ENCODE measurements at regions of chr22 and their contacts with region 1.

Region 1: DNA sequence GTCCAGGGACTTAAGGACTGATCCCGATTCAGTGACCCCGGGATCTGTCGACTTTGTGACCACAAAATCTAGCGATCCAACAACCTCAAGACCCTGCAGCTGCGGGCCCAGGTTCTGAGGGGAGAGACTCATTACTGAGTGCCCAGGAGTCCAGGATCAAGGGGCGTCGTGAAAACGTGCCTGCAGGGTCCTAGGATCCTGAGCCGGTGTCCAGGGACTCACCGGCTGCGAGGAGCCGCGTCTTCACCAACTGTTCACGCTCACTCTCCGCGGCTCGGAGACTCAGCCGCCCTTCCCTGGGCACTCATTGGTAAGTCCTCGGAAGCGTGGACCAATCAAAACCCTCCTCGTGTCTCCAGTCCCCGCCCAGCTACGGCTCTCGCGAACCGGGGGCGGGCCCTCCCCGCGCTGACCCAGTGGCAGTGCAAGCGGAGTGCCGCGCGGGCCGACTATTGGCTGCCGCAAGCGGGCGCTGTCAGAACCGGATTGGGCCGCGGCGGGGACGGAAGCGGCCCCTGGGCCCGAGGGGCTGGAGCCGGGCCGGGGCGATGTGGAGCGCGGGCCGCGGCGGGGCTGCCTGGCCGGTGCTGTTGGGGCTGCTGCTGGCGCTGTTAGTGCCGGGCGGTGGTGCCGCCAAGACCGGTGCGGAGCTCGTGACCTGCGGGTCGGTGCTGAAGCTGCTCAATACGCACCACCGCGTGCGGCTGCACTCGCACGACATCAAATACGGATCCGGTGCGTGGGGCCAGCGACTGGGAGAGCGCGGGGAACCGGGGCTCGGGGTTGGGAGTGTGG is at the start of gene SDF2L1:
- DNase-seq: peak; percentile 98
- CTCF ChIP-seq: peak; percentile 28

Region 2: GRCh38 chr22:21573750-21574494 is 68.1 kb before region 1 on chr22:
- CTCF ChIA-PET with region 1: interaction called, 12 read pairs
- POLR2A ChIA-PET with region 1: interaction called, 3 read pairs
- DNase-seq: no peak
- CTCF ChIP-seq: no peak

Region 3: GRCh38 chr22:21612865-21613265 is 29.1 kb before region 1 on chr22:
- CTCF ChIA-PET with region 1: interaction called, 19 read pairs
- POLR2A ChIA-PET with region 1: no interaction called
- DNase-seq: no peak
- CTCF ChIP-seq: no peak

Region 4: DNA sequence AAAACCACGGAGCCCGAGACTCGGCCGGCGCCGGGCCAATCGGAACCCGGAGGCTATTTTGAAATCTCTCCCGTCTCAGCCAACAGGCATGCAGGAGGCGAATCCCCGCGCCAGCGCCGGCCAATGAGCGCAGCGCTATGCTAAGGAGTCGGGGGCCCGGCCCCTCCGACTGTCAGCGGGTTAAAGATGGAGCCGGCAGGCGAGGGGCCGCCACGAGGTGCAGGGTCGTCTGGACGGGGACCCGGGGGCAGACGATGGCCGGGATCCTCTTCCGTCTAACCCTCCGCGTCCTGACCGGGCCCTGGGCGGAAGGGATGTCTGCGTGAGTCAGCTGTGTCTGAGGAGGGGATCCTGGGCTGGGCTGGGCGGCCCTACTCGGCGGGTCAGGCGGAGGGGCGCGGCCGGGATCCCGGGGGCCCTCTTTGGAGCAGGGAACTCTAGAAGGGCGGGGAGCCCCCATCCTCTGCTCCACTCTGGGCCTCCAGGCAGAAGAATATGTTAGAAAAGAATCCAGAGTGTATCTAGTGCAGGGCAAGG is 10.1 kb after region 1 on chr22:
- CTCF ChIA-PET with region 1: interaction called, 274 read pairs
- POLR2A ChIA-PET with region 1: no interaction called
- DNase-seq: peak; percentile 93
- CTCF ChIP-seq: no peak

Region 5: DNA sequence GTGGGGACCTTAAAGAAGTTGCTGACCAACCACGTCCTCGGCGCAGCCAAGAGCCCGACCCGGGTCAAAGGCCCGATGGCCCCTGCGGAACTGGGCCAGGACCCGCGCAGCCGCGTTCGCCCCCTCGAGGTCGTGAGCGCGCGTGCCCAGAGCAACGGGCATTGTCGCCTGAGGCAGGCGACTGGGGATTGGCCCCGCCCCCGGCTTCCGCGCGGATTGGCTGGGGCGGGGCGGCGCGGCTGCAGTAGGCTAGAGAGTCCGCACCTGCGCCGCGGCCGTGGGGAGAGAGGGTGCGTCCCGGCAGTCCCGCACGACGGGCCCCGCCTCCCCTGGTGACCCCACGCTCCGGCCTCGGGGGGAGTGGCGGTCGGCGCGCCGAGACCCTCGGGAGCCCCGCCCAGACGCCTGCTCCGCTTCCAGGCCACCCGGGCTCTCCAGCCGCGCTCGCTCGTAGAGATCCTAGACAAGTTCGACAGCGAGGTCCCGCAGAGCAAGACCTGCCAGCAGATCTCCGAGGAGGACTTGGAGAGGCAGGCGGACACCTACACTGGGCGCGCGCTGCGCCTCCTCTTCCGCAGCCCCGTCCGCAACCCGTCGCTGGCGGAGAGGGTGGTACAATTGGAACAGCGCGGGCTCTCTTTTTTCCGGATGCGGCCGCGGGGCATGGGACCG is 15.5 kb after region 1 on chr22:
- CTCF ChIA-PET with region 1: interaction called, 53 read pairs
- POLR2A ChIA-PET with region 1: no interaction called
- DNase-seq: peak; percentile 94
- CTCF ChIP-seq: peak; percentile 20

Region 6: DNA sequence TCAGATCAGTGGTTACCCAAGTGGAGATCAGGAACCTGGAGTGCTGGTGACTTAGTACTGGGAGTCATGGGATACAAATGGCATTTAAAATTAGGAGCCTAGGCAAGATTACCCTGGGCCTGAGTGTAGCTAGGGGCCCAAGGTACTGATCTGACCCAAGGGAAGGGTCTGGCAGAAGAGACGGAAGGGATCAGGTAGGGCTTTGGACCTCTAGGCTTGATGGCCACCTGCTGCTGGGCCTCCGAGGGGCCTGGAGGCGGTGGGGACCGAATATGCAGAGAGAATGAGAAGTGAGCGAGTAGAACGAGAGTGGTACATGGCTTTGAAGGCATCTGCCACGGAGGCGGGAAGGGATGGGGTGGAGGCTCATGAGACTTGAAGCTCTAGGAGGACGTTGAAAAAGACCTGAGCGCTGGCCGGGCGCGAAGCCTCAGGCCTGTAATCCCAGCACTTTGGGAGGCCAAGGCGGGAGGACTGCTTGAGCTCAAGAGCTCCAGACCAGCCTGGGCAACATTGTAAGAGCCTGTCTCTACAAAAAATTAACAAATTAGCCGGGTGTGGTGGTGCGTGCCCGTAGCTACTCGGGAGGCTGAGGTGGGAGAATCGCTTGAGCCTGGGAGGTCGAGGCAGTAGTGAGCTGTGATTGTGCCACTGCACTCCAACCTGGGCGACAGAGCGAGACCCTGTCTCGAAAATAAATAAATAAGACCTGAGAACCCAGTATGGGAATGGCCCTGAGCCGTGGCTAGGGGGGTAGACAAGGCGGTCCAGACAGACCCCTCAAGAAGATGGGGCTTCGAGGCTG is 23.3 kb after region 1 on chr22:
- CTCF ChIA-PET with region 1: interaction called, 23 read pairs
- POLR2A ChIA-PET with region 1: no interaction called
- DNase-seq: no peak
- CTCF ChIP-seq: no peak

Measured in GM10248 (cell line).